Posterior vena cava (tissue), 2 donors: ENCODE measurements at regions of chr5 and their contacts with region 1.

Region 1: GRCh38 chr5:121885630-121886029 is 33.9 kb downstream of the FTMT start:
- DNase-seq: no peak

Region 2: GRCh38 chr5:121841892-121842291 is 43.7 kb before region 1 on chr5:
- intact Hi-C with region 1: loop called in 1 of 2 experiments (anchors 1 kb)
- DNase-seq: no peak

Region 3: DNA sequence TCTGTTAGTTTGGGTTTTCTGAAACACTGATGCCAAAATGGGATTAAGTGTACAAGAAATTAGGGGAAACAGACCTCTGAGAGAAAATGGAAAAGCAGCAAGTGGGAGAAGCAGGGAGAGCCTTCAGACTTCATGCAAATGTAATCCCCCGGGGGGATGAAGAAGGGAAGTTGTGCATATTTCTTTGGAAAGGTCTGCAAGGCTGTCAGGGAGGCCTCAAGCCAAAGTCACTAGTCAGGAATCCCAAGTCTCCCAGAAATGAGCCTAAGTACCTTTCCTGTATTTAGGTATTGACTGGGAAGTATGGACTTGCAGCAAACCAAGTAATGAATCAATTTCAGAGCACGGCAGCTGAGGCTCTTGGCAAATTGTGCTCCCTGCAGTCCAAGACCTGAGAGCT is 31.8 kb before region 1 on chr5:
- intact Hi-C with region 1: no loop called
- DNase-seq: no peak

Region 4: DNA sequence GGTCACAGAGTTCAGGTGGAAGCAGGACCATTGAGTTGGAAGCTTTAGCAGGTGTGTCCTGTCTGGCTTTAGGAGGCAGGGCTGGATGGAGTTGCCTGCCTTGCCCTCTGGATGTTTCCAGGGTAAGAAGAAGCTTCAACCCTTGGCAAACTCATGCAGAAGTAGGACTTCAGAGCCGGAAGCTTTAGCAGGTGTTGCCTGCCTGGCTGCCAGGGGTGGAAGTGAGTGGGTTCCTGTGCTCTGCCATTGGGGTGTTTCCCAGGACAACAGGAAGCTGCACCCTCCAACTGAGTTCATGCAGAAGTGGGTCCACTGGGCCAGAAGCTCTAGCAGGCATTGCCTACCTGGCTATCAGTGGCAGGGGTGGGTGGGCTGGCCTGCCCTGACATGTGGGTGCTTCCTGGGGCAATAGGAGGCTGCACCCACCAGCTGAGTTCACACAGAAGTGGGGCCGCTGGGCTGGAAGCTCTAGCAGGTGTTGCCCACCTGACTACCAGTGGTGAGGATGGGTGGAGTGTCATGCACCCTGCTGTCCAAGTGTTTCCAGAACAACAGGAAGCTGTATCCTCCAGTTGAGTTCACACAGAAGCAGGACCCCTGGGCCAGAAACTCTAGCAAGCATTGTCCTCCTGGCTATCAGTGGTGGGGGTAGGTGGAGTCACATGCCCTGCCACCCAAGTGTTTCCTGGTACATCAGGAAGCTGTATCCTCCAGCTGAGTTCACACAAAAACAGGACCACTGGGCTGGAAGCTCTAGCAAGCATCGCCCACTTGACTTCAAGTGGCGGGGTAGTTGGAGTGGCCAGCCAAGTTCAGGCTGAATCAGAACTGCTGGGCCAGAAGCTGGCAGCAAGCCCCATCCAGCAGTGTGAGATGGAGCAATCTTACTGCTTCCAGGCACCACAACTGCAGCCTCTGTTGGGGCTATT is 167.8 kb after region 1 on chr5:
- intact Hi-C with region 1: no loop called
- DNase-seq: peak; percentile 82